ENCODE measurements at regions of chr14 and their contacts with region 1.

Region 1: DNA sequence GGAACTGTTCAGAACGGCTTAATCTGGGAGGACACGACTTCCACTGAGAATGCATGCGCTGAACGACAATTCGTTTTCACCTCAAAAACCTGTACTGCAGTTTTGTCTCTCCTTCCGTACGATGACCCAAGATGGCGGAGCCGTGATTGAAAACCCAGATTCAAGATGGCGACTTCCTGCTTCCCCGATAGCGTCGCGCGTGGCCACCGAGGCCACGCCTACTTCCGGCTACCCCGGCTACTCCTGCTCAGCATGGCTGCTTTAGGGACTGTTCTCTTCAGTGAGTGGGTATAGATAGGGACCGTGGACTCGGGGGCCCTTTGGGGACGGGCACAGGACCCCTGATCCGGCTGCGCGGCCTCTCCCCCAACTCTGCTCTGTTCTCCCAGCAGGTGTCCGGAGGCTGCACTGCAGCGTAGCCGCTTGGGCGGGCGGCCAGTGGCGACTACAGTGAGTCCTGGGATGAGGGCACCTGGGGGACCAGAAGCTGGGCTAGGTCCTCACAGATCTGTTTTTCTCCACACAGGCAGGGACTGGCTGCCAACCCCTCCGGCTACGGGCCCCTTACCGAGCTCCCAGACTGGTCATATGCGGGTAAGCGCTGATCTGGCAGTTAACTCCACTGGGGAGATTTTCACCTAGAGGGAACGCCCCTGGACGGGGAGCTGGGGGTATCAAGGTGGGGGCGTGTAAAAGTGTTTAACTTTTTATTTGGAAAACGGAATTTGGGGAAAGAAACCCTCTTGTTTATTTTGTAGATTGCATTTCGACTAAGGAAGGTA is at the start of gene MRPL52:
- DNase-seq: peak; percentile 87
- ATAC-seq: peak; percentile 97
- H3K4me3 ChIP-seq: peak within 1 kb of the TSS; percentile 95
- H3K27ac ChIP-seq: peak within 1 kb of the TSS; percentile 82
- H3K4me1 ChIP-seq: peaks cover 6% of the 10 kb centered on the region
- H3K27me3 ChIP-seq: no peaks in the 10 kb centered on the region
- CTCF ChIP-seq: no peak
- POLR2A ChIP-seq: peak; percentile 85
- RAD21 ChIP-seq: no peak
- total RNA-seq, gene MRPL52: 23.9 and 51.4 TPM in 2 replicates

Region 2: GRCh38 chr14:22646570-22647254 is 183.1 kb before region 1 on chr14:
- CTCF ChIA-PET with region 1: no interaction called
- POLR2A ChIA-PET with region 1: no interaction called
- dilution Hi-C with region 1: no loop called
- in situ Hi-C with region 1: no loop called
- intact Hi-C with region 1: no loop called
- DNase-seq: peak; percentile 79
- ATAC-seq: peak; percentile 40
- H3K4me3 ChIP-seq: no peak overlapping the region
- H3K27ac ChIP-seq: no peak overlapping the region
- H3K4me1 ChIP-seq: peaks cover 2% of the 10 kb centered on the region; the same call in 1 of the 2 replicates
- H3K27me3 ChIP-seq: peaks cover 6% of the 10 kb centered on the region; the same call in 1 of the 2 replicates
- CTCF ChIP-seq: no peak
- POLR2A ChIP-seq: no peak
- RAD21 ChIP-seq: no peak

Region 3: GRCh38 chr14:22886500-22887259 is 56.8 kb after region 1 on chr14:
- CTCF ChIA-PET with region 1: no interaction called
- POLR2A ChIA-PET with region 1: interaction called, 15 read pairs
- dilution Hi-C with region 1: no loop called
- in situ Hi-C with region 1: no loop called
- intact Hi-C with region 1: no loop called
- DNase-seq: peak; percentile 13
- ATAC-seq: peak; percentile 81
- H3K4me3 ChIP-seq: peak overlapping the region; percentile 47
- H3K27ac ChIP-seq: peak overlapping the region; percentile 6; the same call in 1 of the 2 replicates
- H3K4me1 ChIP-seq: peaks cover 5% of the 10 kb centered on the region; the same call in 1 of the 2 replicates
- H3K27me3 ChIP-seq: no peaks in the 10 kb centered on the region
- CTCF ChIP-seq: 0 out of 2 replicates have a peak, but pooled peaks have one; percentile 10
- POLR2A ChIP-seq: no peak
- RAD21 ChIP-seq: no peak

Region 4: GRCh38 chr14:23034483-23035302 is 204.8 kb after region 1 on chr14 and contains the start of gene PSMB5:
- CTCF ChIA-PET with region 1: no interaction called
- POLR2A ChIA-PET with region 1: no interaction called
- dilution Hi-C with region 1: no loop called
- in situ Hi-C with region 1: no loop called
- intact Hi-C with region 1: no loop called
- DNase-seq: peak; percentile 96
- ATAC-seq: peak; percentile 98
- H3K4me3 ChIP-seq: peak within 1 kb of the TSS; percentile 70
- H3K27ac ChIP-seq: peak within 1 kb of the TSS; percentile 87
- H3K4me1 ChIP-seq: peaks cover 6% of the 10 kb centered on the region; the same call in 1 of the 2 replicates
- H3K27me3 ChIP-seq: no peaks in the 10 kb centered on the region
- CTCF ChIP-seq: no peak
- POLR2A ChIP-seq: peak; percentile 87
- RAD21 ChIP-seq: no peak
- total RNA-seq, gene PSMB5: 268 and 310 TPM in 2 replicates

Region 5: DNA sequence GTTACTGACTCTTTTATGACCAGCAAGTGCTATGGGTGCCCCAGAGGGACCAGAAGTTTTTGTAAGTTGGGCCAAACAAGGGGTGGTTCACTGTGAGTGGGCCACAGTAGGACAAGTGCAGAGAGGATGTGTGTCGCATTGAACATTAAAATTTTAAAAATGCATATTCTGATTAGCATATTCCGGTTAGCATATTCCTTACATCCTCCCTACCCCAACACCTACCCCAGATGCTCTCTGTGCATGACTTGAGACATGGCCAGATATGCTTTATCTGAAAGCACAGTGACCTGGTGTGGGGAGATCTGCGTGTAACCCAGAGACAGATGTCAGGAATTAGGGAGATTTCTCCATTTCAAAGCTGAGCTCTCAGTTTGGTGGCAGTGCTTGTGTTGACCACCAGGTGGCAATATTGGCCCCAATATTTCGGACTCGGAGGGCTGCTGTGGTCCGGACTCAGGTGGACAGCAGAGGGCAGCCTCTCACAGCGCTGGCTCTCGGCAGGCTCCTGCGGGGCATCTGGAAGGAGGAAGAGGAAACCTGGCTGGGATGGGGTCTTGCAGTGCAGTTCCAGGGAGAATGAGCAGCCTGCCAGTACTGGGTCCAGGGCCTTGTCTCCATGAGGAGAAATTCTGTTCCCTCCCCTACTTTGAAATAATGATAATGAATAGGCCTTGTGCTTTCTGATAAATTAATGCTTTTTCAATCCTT is 290.8 kb after region 1 on chr14:
- CTCF ChIA-PET with region 1: no interaction called
- POLR2A ChIA-PET with region 1: no interaction called
- dilution Hi-C with region 1: no loop called
- in situ Hi-C with region 1: no loop called
- intact Hi-C with region 1: no loop called
- DNase-seq: peak; percentile 82
- ATAC-seq: peak; percentile 97
- H3K4me3 ChIP-seq: no peak overlapping the region
- H3K27ac ChIP-seq: no peak overlapping the region
- H3K4me1 ChIP-seq: peaks cover 5% of the 10 kb centered on the region; the same call in 1 of the 2 replicates
- H3K27me3 ChIP-seq: no peaks in the 10 kb centered on the region; the same call in 1 of the 2 replicates
- CTCF ChIP-seq: peak; percentile 100; the same call in 1 of the 2 replicates
- POLR2A ChIP-seq: peak; percentile 53; the same call in 1 of the 2 replicates
- RAD21 ChIP-seq: peak; percentile 100

Measured in IMR-90 (cell line).